SK-N-SH (cell line): ENCODE measurements at regions of chr7 and their contacts with region 1.

Region 1: DNA sequence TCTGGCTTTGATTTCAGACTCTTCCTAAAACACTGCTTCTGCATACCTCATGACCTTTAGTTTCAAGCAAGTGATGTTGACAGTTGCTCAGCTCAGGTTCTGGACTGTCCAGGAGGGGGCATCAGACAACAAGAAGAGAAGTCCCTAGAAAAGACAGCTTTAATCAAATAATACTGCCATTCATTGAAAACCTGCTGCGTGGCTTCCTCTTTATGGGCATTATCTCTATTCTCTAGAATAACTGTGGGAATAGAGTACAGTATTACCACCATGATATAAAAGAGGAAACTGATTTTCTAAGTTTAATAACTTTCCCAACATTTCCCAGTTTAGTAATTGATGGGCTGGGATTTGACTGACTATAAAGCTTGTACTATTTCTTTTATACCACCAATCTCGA is 170.4 kb downstream of the SNX13 start:
- DNase-seq: peak; percentile 48
- H3K4me3 ChIP-seq: no peak overlapping the region; a peak in 1 of 4 replicates
- H3K27ac ChIP-seq: no peak overlapping the region
- H3K4me1 ChIP-seq: peaks cover 0 to 4% of the 10 kb centered on the region in 2 experiments; a peak in 2 of 4 replicates
- H3K27me3 ChIP-seq: no peaks in the 10 kb centered on the region; the same call in 1 of the 2 replicates
- CTCF ChIP-seq: peak; percentile 98
- EP300 ChIP-seq: no peak
- RAD21 ChIP-seq: peak; percentile 99

Region 2: DNA sequence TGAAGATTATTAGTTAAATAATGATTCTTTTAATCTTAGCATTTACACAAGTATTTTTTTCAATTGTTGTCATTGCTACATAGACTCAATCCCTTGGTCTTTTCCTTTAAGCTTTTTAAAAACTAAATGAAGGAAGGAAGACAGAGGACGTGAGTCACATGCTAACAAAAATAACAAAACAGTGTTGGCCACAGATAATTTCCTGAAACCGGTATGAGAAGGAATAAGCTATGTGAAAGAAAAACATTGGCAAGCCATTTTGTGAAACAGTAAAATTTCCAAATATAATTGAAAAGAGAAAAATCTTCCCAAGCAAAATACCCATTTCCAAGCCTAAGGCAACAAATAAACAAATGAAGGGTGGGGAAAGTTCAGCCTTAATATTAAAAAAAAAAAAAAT is 248.5 kb before region 1 on chr7:
- CTCF ChIA-PET with region 1: no interaction called
- POLR2A ChIA-PET with region 1: no interaction called
- DNase-seq: no peak
- H3K4me3 ChIP-seq: no peak overlapping the region
- H3K27ac ChIP-seq: peak overlapping the region in 1 of 2 experiments; percentile 73; a peak in 3 of 4 replicates
- H3K4me1 ChIP-seq: peaks cover 0 to 16% of the 10 kb centered on the region in 2 experiments; a peak in 1 of 4 replicates
- H3K27me3 ChIP-seq: no peaks in the 10 kb centered on the region; the same call in 1 of the 2 replicates
- CTCF ChIP-seq: no peak
- EP300 ChIP-seq: no peak
- RAD21 ChIP-seq: no peak

Region 3: GRCh38 chr7:17706734-17707133 is 63.2 kb before region 1 on chr7:
- CTCF ChIA-PET with region 1: interaction called, 13 read pairs
- POLR2A ChIA-PET with region 1: no interaction called
- DNase-seq: peak; percentile 43
- H3K4me3 ChIP-seq: no peak overlapping the region
- H3K27ac ChIP-seq: no peak overlapping the region
- H3K4me1 ChIP-seq: no peaks in the 10 kb centered on the region
- H3K27me3 ChIP-seq: peaks cover 17% of the 10 kb centered on the region
- CTCF ChIP-seq: peak; percentile 83
- EP300 ChIP-seq: no peak
- RAD21 ChIP-seq: peak; percentile 92

Region 4: GRCh38 chr7:17758008-17758407 is 11.9 kb before region 1 on chr7:
- CTCF ChIA-PET with region 1: interaction called, 53 read pairs
- POLR2A ChIA-PET with region 1: no interaction called
- DNase-seq: peak; percentile 6
- H3K4me3 ChIP-seq: no peak overlapping the region
- H3K27ac ChIP-seq: no peak overlapping the region
- H3K4me1 ChIP-seq: 0 out of 4 replicates have a peak, but pooled peaks cover 0 to 2% of the 10 kb centered on the region in 2 experiments
- H3K27me3 ChIP-seq: 0 out of 2 replicates have a peak, but pooled peaks cover 4% of the 10 kb centered on the region
- CTCF ChIP-seq: no peak
- EP300 ChIP-seq: no peak
- RAD21 ChIP-seq: no peak

Region 5: DNA sequence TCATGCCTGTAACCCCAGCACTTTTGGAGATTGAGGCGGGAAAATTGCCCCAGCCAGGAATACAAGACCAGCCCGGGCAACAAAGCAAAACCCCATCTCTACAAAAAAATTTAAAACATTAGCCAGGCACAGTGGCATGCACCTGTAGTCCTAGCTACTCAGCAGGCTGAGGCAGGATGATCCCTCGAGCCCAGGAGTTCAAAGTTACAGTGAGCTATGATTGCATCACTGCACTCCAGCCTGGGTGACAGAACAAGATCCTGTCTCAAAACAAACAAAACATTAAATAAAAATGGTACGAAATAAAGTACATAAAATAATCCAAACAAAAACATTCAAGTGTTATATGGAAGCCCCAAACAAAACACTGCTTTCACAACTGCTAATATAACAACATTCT is 45.4 kb after region 1 on chr7:
- CTCF ChIA-PET with region 1: interaction called, 11 read pairs
- POLR2A ChIA-PET with region 1: no interaction called
- DNase-seq: no peak
- H3K4me3 ChIP-seq: no peak overlapping the region
- H3K27ac ChIP-seq: no peak overlapping the region
- H3K4me1 ChIP-seq: no peaks in the 10 kb centered on the region
- H3K27me3 ChIP-seq: no peaks in the 10 kb centered on the region
- CTCF ChIP-seq: no peak
- EP300 ChIP-seq: no peak
- RAD21 ChIP-seq: no peak

Region 6: DNA sequence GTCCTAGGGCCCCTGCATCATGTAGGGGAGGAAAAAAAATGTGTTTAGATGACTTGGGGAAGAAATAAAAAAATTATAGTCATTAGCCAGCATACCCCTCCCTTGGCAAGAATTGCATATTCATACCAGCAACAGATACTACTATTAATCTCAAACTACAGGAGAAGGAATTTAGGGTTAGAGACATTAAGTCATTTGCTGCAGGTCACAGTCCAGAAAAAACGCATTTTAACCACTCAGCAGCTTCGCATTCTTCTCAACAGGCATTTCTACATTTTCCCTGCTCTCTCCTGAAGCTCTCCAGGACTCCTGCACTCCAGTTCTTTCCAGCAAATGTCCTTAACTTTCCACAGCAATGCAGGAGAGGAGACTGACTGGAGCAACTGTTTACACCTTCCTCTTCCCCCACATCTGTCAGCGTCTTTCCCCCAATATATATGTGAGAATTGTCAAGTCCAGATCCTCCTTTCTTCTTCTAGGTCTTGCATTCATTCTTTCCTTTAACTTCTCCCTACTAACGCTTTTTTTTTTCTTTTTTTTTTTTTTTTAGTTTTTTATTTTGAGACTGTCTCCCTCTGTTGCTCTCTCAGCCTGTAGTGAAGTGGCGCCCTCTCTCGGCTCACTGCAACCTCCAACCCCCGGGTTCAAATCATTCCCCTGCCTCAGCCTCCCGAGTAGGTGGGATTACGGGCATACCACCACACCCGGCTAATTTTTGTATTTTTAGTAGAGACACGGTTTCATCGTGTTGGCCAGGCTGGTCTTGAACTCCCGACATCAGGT is 222.1 kb after region 1 on chr7:
- CTCF ChIA-PET with region 1: interaction called, 10 read pairs
- POLR2A ChIA-PET with region 1: no interaction called
- DNase-seq: no peak
- H3K4me3 ChIP-seq: no peak overlapping the region
- H3K27ac ChIP-seq: no peak overlapping the region
- H3K4me1 ChIP-seq: no peaks in the 10 kb centered on the region; a peak in 1 of 4 replicates
- H3K27me3 ChIP-seq: peaks cover 8% of the 10 kb centered on the region; the same call in 1 of the 2 replicates
- CTCF ChIP-seq: peak; percentile 48
- EP300 ChIP-seq: no peak
- RAD21 ChIP-seq: peak; percentile 40

Region 7: DNA sequence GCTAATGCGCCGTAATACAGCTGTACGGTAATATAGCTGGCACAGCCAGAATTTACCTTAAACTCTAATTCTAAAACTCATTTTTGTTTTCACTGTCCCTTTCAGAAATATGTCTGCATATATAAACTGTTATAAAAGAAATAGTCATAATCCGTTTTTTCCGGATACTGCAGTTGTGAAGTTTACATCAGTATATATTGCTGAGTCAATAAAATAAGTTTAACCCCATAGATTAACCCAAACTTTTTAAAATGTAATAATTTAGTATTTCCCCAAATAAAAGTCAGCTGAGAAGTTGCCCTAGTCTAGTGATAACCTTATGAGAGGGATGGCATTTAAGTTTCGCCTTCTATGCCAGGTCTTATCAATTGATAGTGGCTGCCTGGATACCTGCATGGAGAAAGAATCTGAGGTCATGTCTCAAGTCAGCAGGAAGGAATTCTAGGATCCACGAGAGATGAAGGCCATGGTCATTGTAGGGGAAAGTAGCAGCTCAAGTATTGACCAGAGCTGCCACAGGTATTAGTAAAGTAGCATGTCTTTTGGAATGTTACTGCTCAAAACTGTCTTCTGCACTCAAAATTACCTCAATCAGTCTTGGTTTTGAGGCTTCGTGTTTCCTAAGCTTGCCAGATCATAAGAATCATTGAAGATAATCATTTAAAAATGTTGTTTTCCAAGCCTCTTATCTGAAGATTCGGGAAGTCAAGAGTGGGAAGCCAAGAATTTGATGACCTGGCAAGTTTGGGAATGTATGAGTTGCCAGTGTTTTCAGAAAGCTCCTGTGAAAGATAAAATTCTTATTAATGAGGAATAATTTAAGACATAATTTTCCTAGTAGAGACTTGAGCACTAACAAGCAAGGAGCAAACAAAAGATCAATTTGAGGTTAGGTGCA is 246.9 kb after region 1 on chr7:
- CTCF ChIA-PET with region 1: no interaction called
- POLR2A ChIA-PET with region 1: no interaction called
- DNase-seq: no peak
- H3K4me3 ChIP-seq: no peak overlapping the region
- H3K27ac ChIP-seq: no peak overlapping the region
- H3K4me1 ChIP-seq: peaks cover 0 to 20% of the 10 kb centered on the region in 2 experiments; a peak in 2 of 4 replicates
- H3K27me3 ChIP-seq: no peaks in the 10 kb centered on the region
- CTCF ChIP-seq: no peak
- EP300 ChIP-seq: no peak
- RAD21 ChIP-seq: no peak

Region 8: GRCh38 chr7:18064242-18064838 is 294.4 kb after region 1 on chr7:
- CTCF ChIA-PET with region 1: interaction called, 28 read pairs
- POLR2A ChIA-PET with region 1: no interaction called
- DNase-seq: peak; percentile 26
- H3K4me3 ChIP-seq: no peak overlapping the region
- H3K27ac ChIP-seq: no peak overlapping the region
- H3K4me1 ChIP-seq: no peaks in the 10 kb centered on the region
- H3K27me3 ChIP-seq: peaks cover 22% of the 10 kb centered on the region; the same call in 1 of the 2 replicates
- CTCF ChIP-seq: peak; percentile 52
- EP300 ChIP-seq: no peak
- RAD21 ChIP-seq: peak; percentile 75

Region 9: GRCh38 chr7:18337048-18337809 is 567.3 kb after region 1 on chr7:
- CTCF ChIA-PET with region 1: interaction called, 227 read pairs
- POLR2A ChIA-PET with region 1: no interaction called
- DNase-seq: no peak
- H3K4me3 ChIP-seq: no peak overlapping the region
- H3K27ac ChIP-seq: no peak overlapping the region
- H3K4me1 ChIP-seq: no peaks in the 10 kb centered on the region
- H3K27me3 ChIP-seq: no peaks in the 10 kb centered on the region; the same call in 1 of the 2 replicates
- CTCF ChIP-seq: no peak
- EP300 ChIP-seq: no peak
- RAD21 ChIP-seq: no peak